SK-N-SH (cell line): ENCODE measurements at regions of chr7 and their contacts with region 1.

Region 1: GRCh38 chr7:135672560-135673359 is 10.4 kb downstream of the STMP1 start:
- DNase-seq: peak; percentile 70
- H3K4me3 ChIP-seq: no peak overlapping the region
- H3K27ac ChIP-seq: peak overlapping the region; percentile 71 to 77
- H3K4me1 ChIP-seq: peaks cover 6 to 30% of the 10 kb centered on the region in 2 experiments; a peak in 3 of 4 replicates
- H3K27me3 ChIP-seq: no peaks in the 10 kb centered on the region
- CTCF ChIP-seq: peak; percentile 99
- EP300 ChIP-seq: no peak
- RAD21 ChIP-seq: peak; percentile 93

Region 2: GRCh38 chr7:135553346-135553745 is 119.4 kb before region 1 on chr7:
- CTCF ChIA-PET with region 1: no interaction called
- POLR2A ChIA-PET with region 1: no interaction called
- DNase-seq: no peak
- H3K4me3 ChIP-seq: no peak overlapping the region
- H3K27ac ChIP-seq: no peak overlapping the region
- H3K4me1 ChIP-seq: no peaks in the 10 kb centered on the region
- H3K27me3 ChIP-seq: no peaks in the 10 kb centered on the region
- CTCF ChIP-seq: no peak
- EP300 ChIP-seq: no peak
- RAD21 ChIP-seq: no peak

Region 3: DNA sequence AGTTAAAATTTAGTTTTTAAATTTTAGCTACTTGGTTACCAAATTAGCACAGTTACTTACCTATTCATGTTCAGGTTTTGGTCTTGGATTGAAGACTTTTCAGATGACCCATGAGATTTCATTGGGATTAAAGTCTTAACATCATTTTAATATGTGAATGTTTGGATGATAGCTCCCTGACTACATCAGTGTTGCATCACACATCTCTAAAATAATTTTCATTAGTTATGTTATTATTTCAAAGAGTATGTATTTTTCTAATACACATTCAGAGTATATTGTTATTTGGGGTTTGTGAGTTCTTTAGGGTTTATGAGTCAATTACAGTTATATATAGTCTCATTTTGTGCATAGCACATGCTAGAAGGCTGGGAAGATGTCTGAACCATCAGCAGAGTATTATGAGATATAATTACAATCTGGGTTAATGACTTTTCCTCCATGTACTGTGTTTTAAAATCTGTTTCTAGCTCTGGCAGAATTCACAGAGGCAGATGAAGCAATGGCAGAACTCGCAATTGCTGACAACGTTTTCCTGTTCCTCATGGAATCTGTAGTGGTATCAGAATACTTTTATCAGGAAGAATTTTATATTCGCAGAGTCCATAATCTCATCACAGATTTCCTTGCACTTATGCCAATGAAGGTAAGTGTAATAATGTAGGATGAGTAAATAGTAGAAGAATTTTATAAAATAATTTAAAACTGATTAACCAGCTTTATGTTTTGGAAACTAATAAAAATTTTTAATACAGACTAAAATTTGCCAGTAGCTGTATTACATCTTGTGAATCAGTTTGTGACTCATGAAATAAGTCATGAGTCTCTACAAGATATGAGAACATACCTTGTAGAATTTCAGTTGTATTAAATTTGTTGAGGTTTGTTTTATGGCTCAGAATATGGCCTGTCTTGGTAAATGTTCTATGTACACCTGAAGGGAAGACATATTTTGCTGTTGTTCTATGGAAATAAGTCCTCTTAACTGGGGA is 88.1 kb before region 1 on chr7:
- CTCF ChIA-PET with region 1: no interaction called
- POLR2A ChIA-PET with region 1: no interaction called
- DNase-seq: no peak
- H3K4me3 ChIP-seq: no peak overlapping the region
- H3K27ac ChIP-seq: peak overlapping the region in 1 of 2 experiments; percentile 62; a peak in 2 of 4 replicates
- H3K4me1 ChIP-seq: peaks cover 0 to 5% of the 10 kb centered on the region in 2 experiments; a peak in 1 of 4 replicates
- H3K27me3 ChIP-seq: no peaks in the 10 kb centered on the region
- CTCF ChIP-seq: no peak
- EP300 ChIP-seq: no peak
- RAD21 ChIP-seq: no peak

Region 4: DNA sequence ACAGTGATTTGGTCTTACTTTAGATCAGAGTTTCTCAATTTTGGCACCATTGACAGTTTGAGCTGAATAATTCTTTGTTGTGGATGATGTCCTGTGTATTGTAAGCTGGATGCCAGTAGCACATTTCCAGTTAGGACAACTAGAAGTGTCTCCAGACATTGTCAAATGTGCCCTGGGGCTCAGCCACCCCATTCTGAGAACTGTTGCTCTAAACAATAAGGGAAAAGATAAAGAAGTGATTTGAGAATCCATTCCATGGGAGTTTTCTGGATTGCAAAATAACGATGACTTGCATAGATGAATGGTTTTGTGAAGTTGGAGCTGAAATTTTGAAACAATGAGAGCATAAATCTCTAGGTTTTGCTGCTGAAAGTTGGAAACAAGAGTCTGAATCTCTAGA is 70.5 kb before region 1 on chr7:
- CTCF ChIA-PET with region 1: no interaction called
- POLR2A ChIA-PET with region 1: no interaction called
- DNase-seq: no peak
- H3K4me3 ChIP-seq: no peak overlapping the region
- H3K27ac ChIP-seq: peak overlapping the region in 1 of 2 experiments; percentile 96; a peak in 2 of 4 replicates
- H3K4me1 ChIP-seq: peaks cover 11 to 21% of the 10 kb centered on the region in 2 experiments
- H3K27me3 ChIP-seq: no peaks in the 10 kb centered on the region
- CTCF ChIP-seq: no peak
- EP300 ChIP-seq: no peak
- RAD21 ChIP-seq: no peak

Region 5: GRCh38 chr7:135645296-135645904 is 27.4 kb before region 1 on chr7:
- CTCF ChIA-PET with region 1: interaction called, 11 read pairs
- POLR2A ChIA-PET with region 1: no interaction called
- DNase-seq: peak; percentile 62
- H3K4me3 ChIP-seq: no peak overlapping the region
- H3K27ac ChIP-seq: peak overlapping the region in 1 of 2 experiments; percentile 24; a peak in 2 of 4 replicates
- H3K4me1 ChIP-seq: peaks cover 0 to 6% of the 10 kb centered on the region in 2 experiments; a peak in 2 of 4 replicates
- H3K27me3 ChIP-seq: no peaks in the 10 kb centered on the region
- CTCF ChIP-seq: peak; percentile 92
- EP300 ChIP-seq: no peak
- RAD21 ChIP-seq: peak; percentile 80

Region 6: DNA sequence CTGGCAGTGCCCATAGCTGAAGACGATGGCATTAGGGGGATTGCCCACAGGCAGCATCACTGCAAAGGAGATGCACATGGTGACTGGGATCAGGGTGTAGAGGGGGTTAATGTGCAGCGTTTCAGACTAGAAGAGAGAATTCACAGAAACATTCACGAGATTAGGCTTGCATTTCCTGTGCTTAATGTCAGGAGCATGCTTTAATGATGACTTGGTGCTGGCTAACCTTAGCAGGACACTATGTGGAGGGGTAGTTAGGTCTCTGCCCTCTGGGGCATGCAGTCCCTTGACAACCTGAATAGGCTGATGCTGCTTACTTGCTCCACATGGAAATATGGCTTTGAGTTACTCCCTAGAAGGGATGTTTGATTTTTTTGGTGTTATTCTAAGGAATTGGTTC is 11.4 kb after region 1 on chr7:
- CTCF ChIA-PET with region 1: interaction called, 23 read pairs
- POLR2A ChIA-PET with region 1: no interaction called
- DNase-seq: no peak
- H3K4me3 ChIP-seq: 0 out of 4 replicates have a peak overlapping the region, but pooled peaks of 1 of the 2 experiments have one; percentile 1
- H3K27ac ChIP-seq: peak overlapping the region; percentile 39 to 59
- H3K4me1 ChIP-seq: peaks cover 37 to 40% of the 10 kb centered on the region in 2 experiments
- H3K27me3 ChIP-seq: no peaks in the 10 kb centered on the region
- CTCF ChIP-seq: no peak
- EP300 ChIP-seq: peak; percentile 2 to 48; a peak in 1 of 4 replicates
- RAD21 ChIP-seq: no peak

Region 7: DNA sequence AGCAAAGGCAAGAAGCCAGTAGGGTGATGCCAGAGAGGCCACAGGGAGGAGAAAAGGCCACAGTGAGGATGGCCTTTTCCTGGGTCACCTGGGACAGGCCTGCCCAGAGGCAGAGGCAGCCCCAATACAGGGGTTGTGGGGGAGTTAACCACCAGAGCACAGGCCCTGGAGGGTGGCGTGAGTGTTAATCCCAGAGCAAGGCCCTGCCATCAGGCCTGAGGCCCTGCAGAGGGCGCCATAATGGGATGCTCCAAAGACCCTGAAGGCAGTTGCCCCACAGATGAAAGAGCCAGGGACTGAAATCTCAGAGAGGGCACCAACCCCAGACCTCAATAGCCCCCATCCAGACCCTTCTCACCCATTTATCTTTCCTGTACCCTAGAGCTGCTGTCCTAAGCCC is 31.3 kb after region 1 on chr7:
- CTCF ChIA-PET with region 1: interaction called, 46 read pairs
- POLR2A ChIA-PET with region 1: no interaction called
- DNase-seq: no peak
- H3K4me3 ChIP-seq: no peak overlapping the region
- H3K27ac ChIP-seq: no peak overlapping the region
- H3K4me1 ChIP-seq: peaks cover 0 to 5% of the 10 kb centered on the region in 2 experiments; a peak in 1 of 4 replicates
- H3K27me3 ChIP-seq: no peaks in the 10 kb centered on the region
- CTCF ChIP-seq: peak; percentile 59
- EP300 ChIP-seq: no peak
- RAD21 ChIP-seq: no peak

Region 8: DNA sequence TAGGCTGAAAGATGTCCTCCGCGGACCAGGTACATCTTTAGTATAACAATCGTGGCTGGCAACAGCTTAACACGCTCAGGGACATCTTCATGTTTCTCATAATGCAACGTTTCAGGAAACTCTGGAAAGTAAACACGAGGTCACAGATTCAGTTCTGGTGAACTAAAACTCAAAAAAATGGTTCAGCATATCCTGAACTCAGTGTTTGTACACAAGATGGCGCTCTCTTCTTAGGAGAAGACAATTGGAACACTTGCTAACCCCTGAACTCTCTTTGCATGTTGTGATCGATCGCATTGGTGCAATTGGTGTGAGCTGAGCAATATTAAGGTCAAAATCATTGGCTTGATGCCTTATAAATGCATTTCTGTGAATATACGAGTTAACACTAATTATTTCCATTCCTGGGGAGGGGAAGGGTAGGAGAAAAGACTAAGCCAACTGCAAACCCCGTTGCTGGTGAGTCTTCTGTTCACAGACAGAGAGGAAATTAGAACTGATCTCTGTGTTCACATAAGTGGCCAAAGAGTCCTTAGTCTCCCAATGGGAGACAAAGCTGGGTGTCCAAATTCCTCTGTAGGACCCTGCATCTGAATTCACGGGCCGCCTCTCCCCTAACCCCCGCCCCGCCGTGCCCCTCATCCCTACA is 128.4 kb after region 1 on chr7:
- CTCF ChIA-PET with region 1: interaction called, 43 read pairs
- POLR2A ChIA-PET with region 1: no interaction called
- DNase-seq: peak; percentile 73
- H3K4me3 ChIP-seq: no peak overlapping the region; a peak in 1 of 4 replicates
- H3K27ac ChIP-seq: no peak overlapping the region
- H3K4me1 ChIP-seq: peaks cover 0 to 9% of the 10 kb centered on the region in 2 experiments; a peak in 1 of 4 replicates
- H3K27me3 ChIP-seq: no peaks in the 10 kb centered on the region
- CTCF ChIP-seq: peak; percentile 98
- EP300 ChIP-seq: no peak
- RAD21 ChIP-seq: peak; percentile 100

Region 9: DNA sequence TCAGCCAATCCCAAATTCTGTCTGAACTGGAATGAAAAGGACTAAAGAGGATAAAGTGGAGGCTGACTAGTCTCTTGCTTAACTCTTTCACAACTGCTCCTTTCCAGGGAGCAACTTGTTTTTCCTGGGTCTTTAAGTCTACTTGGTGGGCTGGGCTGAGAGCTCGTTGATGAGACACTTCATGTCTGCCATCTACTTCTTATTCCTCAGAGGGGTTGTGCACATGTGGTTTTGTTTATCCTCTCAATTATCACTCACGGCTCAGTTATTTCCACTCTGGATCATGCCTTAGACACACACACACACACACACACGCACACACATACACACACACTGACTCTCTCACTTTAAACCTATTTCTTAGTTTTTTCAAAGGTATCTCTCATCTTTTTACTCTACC is 603.0 kb after region 1 on chr7:
- CTCF ChIA-PET with region 1: no interaction called
- POLR2A ChIA-PET with region 1: no interaction called
- DNase-seq: peak; percentile 6
- H3K4me3 ChIP-seq: no peak overlapping the region
- H3K27ac ChIP-seq: no peak overlapping the region
- H3K4me1 ChIP-seq: no peaks in the 10 kb centered on the region
- H3K27me3 ChIP-seq: no peaks in the 10 kb centered on the region
- CTCF ChIP-seq: no peak
- EP300 ChIP-seq: no peak
- RAD21 ChIP-seq: no peak